Panc1 (cell line): ENCODE measurements at regions of chr20 and their contacts with region 1.

Region 1: DNA sequence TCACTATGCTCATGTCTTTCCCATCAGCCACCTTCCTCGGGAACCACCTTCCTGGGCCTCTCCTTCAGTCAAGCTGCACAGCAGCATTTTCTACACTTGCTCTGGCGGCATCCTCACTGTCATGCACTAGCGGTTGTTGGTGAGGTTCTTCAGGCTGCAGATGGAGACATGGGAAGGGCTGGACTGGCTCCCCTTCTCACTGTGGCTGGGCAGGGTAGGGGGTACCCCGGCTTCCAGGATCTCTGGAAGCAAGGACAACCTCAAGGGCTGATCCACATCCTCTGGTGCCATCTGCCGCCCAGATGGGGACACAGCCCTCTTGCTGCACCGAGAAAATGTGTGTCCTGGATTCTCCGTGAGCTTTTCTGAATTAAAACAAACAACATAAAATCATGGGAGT is 180.1 kb upstream of the RNF24 start:
- DNase-seq: no peak
- ATAC-seq: no peak
- H3K4me3 ChIP-seq: no peak overlapping the region
- H3K27ac ChIP-seq: no peak overlapping the region
- H3K4me1 ChIP-seq: no peaks in the 10 kb centered on the region
- H3K27me3 ChIP-seq: no peaks in the 10 kb centered on the region
- CTCF ChIP-seq: peak; percentile 82

Region 2: DNA sequence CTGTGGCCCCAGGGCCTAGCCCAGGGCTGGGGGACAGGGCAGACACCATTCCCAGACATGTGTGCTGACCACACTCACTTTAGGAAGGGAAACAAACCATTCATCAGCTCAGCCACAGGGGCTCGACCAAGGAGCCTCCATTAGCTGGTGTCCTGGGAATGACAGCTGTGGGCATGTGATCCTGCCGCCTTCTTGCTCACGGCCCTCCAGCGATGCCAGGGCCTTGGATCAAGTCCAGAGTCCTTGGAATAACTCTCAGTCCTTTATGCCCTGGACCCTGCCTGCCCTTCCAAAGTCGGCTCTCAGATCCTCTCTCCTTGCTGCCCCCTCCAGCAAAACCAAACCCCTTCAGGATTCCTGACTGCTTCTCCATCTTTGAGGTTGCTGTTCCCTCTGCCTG is 15.1 kb before region 1 on chr20:
- CTCF ChIA-PET with region 1: interaction called, 3 read pairs
- POLR2A ChIA-PET with region 1: interaction called, 18 read pairs
- in situ Hi-C with region 1: no loop called
- intact Hi-C with region 1: no loop called
- DNase-seq: no peak
- ATAC-seq: no peak
- H3K4me3 ChIP-seq: no peak overlapping the region
- H3K27ac ChIP-seq: no peak overlapping the region
- H3K4me1 ChIP-seq: no peaks in the 10 kb centered on the region
- H3K27me3 ChIP-seq: no peaks in the 10 kb centered on the region
- CTCF ChIP-seq: no peak

Region 3: DNA sequence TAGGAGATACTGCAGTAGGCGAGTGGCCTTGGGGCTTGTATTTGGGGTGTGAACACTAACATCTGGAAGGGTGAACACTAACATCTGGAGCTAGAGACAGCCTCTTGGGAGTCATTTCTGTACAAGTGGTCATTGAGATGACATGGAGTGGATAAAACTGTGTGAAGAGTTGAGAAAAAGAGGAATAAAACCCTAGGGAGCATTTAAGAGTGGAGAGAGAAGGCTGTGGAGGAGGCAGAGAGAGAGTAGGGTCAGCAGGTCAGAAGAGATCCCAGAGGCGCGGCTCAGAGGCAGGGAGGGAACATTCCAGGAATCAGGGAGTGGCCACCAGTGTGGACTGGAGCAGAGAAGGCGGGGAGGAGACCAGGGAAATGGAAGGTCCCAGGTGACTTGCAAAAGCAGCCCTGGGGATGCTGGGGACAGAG is 21.9 kb after region 1 on chr20:
- CTCF ChIA-PET with region 1: no interaction called
- POLR2A ChIA-PET with region 1: interaction called, 12 read pairs
- in situ Hi-C with region 1: no loop called
- intact Hi-C with region 1: no loop called
- DNase-seq: no peak
- ATAC-seq: no peak
- H3K4me3 ChIP-seq: no peak overlapping the region
- H3K27ac ChIP-seq: no peak overlapping the region
- H3K4me1 ChIP-seq: no peaks in the 10 kb centered on the region; the same call in 1 of the 2 replicates
- H3K27me3 ChIP-seq: no peaks in the 10 kb centered on the region
- CTCF ChIP-seq: no peak

Region 4: GRCh38 chr20:4261333-4262217 is 66.1 kb after region 1 on chr20:
- CTCF ChIA-PET with region 1: no interaction called
- POLR2A ChIA-PET with region 1: no interaction called
- in situ Hi-C with region 1: no loop called
- intact Hi-C with region 1: no loop called
- DNase-seq: no peak
- ATAC-seq: no peak
- H3K4me3 ChIP-seq: no peak overlapping the region
- H3K27ac ChIP-seq: no peak overlapping the region
- H3K4me1 ChIP-seq: no peaks in the 10 kb centered on the region
- H3K27me3 ChIP-seq: peaks cover 8% of the 10 kb centered on the region
- CTCF ChIP-seq: no peak